ENCODE measurements at regions of chr2 and their contacts with region 1.

Region 1: GRCh38 chr2:157492189-157492773 is 48.4 kb upstream of the CYTIP start:
- DNase-seq: peak; percentile 54
- H3K4me3 ChIP-seq: peak overlapping the region in 1 of 2 experiments; percentile 41; a peak in 1 of 4 replicates
- H3K27ac ChIP-seq: no peak overlapping the region
- H3K4me1 ChIP-seq: no peaks in the 10 kb centered on the region
- H3K27me3 ChIP-seq: peaks cover 23% of the 10 kb centered on the region
- CTCF ChIP-seq: peak; percentile 71
- EP300 ChIP-seq: no peak
- RAD21 ChIP-seq: peak; percentile 83

Region 2: DNA sequence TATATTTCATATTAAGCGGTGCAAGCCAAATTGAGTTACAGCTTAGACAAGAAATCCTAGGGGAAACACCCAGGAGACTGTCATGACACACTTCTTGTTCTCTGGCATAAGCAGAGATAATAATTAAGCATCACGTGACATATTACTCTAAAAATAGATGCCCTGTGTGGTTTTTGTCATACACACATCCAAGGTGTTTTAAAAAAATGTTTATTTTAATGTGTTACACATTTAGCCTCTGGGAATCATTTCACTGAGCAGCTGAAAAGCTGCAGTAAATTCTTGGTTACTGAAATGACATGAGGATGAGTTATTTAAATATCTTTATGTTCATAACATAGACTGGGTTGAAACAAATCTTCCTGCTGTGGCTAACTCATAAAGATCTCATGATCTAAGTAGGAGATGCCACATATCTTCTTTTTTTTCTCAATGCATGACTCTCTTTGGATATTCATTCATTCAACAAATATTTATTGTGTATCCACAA is 128.6 kb before region 1 on chr2:
- CTCF ChIA-PET with region 1: no interaction called
- POLR2A ChIA-PET with region 1: no interaction called
- DNase-seq: no peak
- H3K4me3 ChIP-seq: no peak overlapping the region
- H3K27ac ChIP-seq: no peak overlapping the region
- H3K4me1 ChIP-seq: no peaks in the 10 kb centered on the region
- H3K27me3 ChIP-seq: no peaks in the 10 kb centered on the region
- CTCF ChIP-seq: no peak
- EP300 ChIP-seq: no peak
- RAD21 ChIP-seq: no peak

Region 3: DNA sequence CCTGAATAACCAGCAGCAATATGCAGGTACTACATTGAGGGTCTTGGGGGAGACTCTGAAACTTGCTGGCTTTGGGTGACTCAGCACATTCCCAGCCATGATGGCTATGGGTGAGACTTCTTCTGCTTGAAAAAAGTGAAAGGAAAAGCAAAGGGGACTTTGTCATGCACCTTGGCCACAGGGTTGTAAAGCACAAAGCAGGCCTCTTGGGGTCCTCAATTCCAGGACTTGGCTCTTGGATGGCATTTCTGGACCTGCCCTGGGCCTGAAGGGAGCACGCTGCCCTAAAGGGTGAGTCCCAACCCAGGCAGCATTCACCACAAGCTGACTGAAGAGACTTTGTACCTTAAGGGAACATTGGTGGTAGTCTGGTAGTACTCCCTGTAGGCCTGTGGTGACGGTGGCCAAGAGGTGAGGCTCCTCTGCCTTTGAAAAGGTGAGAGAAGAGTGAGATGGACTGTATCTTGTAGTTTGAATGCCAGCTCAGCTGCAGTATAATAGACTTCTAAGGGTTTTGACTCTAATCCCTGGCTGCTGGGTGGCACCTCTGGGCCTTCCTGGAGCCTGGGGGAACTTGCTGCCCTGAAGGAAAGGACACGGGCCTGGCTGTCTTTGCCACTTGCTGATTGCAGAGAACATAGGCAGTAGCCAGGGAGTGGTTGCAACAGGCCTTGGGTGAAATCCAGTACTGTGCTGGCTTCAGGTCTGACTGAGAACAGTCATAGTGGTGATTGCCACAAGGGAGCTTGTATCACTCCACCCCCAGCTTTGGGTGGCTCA is 11.9 kb before region 1 on chr2:
- CTCF ChIA-PET with region 1: interaction called, 14 read pairs
- POLR2A ChIA-PET with region 1: no interaction called
- DNase-seq: no peak
- H3K4me3 ChIP-seq: no peak overlapping the region
- H3K27ac ChIP-seq: no peak overlapping the region
- H3K4me1 ChIP-seq: no peaks in the 10 kb centered on the region
- H3K27me3 ChIP-seq: peaks cover 11% of the 10 kb centered on the region; the same call in 1 of the 2 replicates
- CTCF ChIP-seq: no peak
- EP300 ChIP-seq: no peak
- RAD21 ChIP-seq: no peak

Region 4: DNA sequence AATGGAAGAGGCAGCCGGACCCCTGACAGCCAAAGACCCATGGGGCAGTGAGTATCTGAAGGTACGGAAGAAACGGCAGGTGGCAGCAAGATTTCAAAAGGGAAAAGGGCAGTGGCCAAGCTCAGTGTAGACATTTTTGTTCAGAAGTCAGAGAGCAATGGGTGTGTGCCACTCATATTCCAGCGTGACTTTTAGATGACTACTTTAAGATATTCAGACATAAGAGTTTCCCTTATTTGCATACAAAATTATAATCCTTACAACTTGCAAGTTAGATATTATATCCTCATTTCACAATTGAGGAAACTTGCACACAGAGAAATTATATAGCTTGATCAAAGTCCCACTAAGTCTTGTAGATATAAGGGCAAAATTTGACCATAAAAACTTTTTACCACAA is 12.3 kb after region 1 on chr2:
- CTCF ChIA-PET with region 1: interaction called, 14 read pairs
- POLR2A ChIA-PET with region 1: no interaction called
- DNase-seq: no peak
- H3K4me3 ChIP-seq: no peak overlapping the region
- H3K27ac ChIP-seq: no peak overlapping the region
- H3K4me1 ChIP-seq: no peaks in the 10 kb centered on the region
- H3K27me3 ChIP-seq: no peaks in the 10 kb centered on the region; the same call in 1 of the 2 replicates
- CTCF ChIP-seq: no peak
- EP300 ChIP-seq: no peak
- RAD21 ChIP-seq: no peak

Region 5: DNA sequence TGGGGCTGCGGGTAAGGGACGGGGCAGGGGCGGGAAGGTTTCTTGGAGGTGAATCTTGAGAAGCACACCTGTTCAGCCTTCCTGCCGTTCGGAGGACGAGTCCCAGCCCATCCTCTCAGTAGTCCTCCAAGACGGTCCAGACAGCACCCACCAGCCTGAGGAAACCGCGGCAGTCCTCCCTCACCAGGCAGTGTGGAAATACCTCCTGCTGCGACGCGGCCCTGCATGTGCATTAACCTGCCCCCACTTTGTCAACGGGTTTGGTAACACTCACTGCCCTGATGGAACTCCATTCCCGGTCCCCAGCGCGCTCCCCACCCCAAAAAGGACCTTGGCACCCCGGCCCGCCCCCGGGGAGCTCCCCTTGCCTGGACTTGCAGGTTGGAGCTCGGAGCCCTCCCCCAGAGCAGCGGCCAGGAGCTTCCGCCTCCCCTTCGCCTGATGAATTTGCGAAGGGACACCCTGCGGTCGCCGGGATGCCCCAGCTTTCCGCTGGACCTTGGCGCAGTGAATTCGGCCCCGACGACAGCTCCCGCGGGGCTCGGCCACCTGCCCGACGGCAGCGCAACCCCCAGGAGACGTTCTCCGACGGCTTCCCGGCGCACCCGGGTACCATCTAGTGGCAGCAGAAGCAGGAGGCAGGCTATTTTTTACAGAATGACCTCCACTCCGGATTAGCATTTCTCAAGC is 104.9 kb after region 1 on chr2:
- CTCF ChIA-PET with region 1: interaction called, 14 read pairs
- POLR2A ChIA-PET with region 1: no interaction called
- DNase-seq: peak; percentile 57
- H3K4me3 ChIP-seq: peak overlapping the region in 1 of 2 experiments; percentile 16; a peak in 1 of 4 replicates
- H3K27ac ChIP-seq: no peak overlapping the region
- H3K4me1 ChIP-seq: no peaks in the 10 kb centered on the region
- H3K27me3 ChIP-seq: no peaks in the 10 kb centered on the region; the same call in 1 of the 2 replicates
- CTCF ChIP-seq: peak; percentile 44
- EP300 ChIP-seq: no peak
- RAD21 ChIP-seq: peak; percentile 31

Region 6: DNA sequence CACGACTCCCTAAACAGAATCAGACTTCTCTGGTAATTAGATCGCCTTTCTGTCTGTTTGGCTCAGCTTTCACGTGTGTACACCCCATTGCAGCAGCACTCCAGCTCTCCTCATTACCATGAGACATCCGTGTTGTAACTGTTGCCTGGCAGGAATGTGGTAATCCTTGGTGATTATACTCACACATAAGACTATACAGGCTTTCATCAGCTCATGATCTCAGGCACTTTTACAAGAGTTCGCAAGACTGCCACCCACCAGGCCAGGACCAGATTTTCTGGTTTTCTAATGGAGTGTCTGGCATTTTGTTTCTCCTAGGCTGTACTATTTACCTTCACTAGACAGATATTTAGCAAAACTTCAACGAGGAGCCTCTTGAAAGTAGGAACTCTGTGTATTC is 333.6 kb after region 1 on chr2:
- CTCF ChIA-PET with region 1: no interaction called
- POLR2A ChIA-PET with region 1: no interaction called
- DNase-seq: no peak
- H3K4me3 ChIP-seq: no peak overlapping the region
- H3K27ac ChIP-seq: no peak overlapping the region; a peak in 1 of 4 replicates
- H3K4me1 ChIP-seq: peaks cover 3 to 14% of the 10 kb centered on the region in 2 experiments; a peak in 2 of 4 replicates
- H3K27me3 ChIP-seq: no peaks in the 10 kb centered on the region
- CTCF ChIP-seq: no peak
- EP300 ChIP-seq: no peak
- RAD21 ChIP-seq: no peak